Activated CD4-positive, alpha-beta memory T cell treated with anti-CD3 and anti-CD28 coated beads for 36 hours (primary cell): ENCODE measurements at regions of chr4 and their contacts with region 1.

Region 1: DNA sequence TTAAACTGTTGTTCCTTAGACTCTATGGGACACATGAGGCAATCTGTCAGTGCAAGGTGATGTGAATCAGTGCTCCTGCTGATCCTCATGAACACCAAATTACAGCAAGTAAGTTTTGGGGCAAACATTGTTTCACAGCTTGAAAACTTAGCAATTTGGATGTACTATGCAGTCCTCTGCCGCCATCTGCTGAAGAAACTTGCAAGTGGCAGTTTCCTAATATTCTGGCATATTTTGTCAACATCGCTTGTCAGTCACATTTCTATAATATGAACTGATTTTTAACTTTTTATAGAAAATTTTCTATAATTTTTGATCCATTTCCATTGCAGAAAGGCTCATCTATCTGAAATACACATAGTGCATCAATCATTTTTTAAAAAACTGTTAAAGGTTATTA is 56.3 kb downstream of the ZAR1 start:
- DNase-seq: peak; percentile 43
- H3K4me3 Mint-ChIP-seq: no peak overlapping the region
- H3K27ac Mint-ChIP-seq: no peak overlapping the region
- H3K4me1 Mint-ChIP-seq: peaks cover 2% of the 10 kb centered on the region
- H3K27me3 Mint-ChIP-seq: no peaks in the 10 kb centered on the region

Region 2: GRCh38 chr4:48315728-48316630 is 230.4 kb before region 1 on chr4:
- CTCF ChIA-PET with region 1: no interaction called
- POLR2A ChIA-PET with region 1: no interaction called
- intact Hi-C with region 1: loop called (anchors 5 kb)
- DNase-seq: peak; percentile 43
- H3K4me3 Mint-ChIP-seq: no peak overlapping the region
- H3K27ac Mint-ChIP-seq: no peak overlapping the region
- H3K4me1 Mint-ChIP-seq: peaks cover 5% of the 10 kb centered on the region
- H3K27me3 Mint-ChIP-seq: no peaks in the 10 kb centered on the region

Region 3: DNA sequence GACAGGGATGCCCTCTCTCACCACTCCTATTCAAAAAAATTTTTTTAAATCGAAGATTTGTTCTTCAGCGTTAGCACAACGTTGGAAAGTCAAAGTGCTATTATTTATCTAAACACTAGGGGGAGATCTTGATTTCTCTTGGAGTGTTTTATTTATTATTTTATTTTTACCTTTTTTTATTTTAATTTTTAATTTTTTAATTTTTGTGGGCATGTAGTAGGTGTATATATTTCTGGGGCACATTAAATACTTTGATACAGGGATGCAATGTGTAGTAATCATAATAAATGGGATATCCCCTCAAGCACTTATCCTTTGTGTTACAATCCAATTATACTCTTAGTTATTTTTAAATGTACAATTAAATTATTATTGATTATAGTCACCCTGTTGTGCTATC is 100.6 kb before region 1 on chr4:
- CTCF ChIA-PET with region 1: interaction called, 4 read pairs
- POLR2A ChIA-PET with region 1: no interaction called
- intact Hi-C with region 1: loop called (anchors 2 kb)
- DNase-seq: no peak
- H3K4me3 Mint-ChIP-seq: no peak overlapping the region
- H3K27ac Mint-ChIP-seq: no peak overlapping the region
- H3K4me1 Mint-ChIP-seq: no peaks in the 10 kb centered on the region
- H3K27me3 Mint-ChIP-seq: peaks cover 7% of the 10 kb centered on the region